ENCODE measurements at regions of chr2 and their contacts with region 1.

Region 1: GRCh38 chr2:26605195-26605998 is 35.8 kb downstream of the CIB4 start:
- DNase-seq: peak; percentile 53
- H3K4me3 ChIP-seq: no peak overlapping the region
- H3K27ac ChIP-seq: no peak overlapping the region
- H3K4me1 ChIP-seq: no peaks in the 10 kb centered on the region
- H3K27me3 ChIP-seq: no peaks in the 10 kb centered on the region
- CTCF ChIP-seq: peak; percentile 83 to 93 (median 90)
- EP300 ChIP-seq: no peak
- POLR2A ChIP-seq: no peak

Region 2: GRCh38 chr2:26745609-26746327 is 140.4 kb after region 1 on chr2:
- intact Hi-C with region 1: loop called (anchors 1 kb)
- DNase-seq: peak; percentile 90
- H3K4me3 ChIP-seq: no peak overlapping the region
- H3K27ac ChIP-seq: no peak overlapping the region
- H3K4me1 ChIP-seq: peaks cover 0 to 3% (median 0%) of the 10 kb centered on the region in 4 donors
- H3K27me3 ChIP-seq: no peaks in the 10 kb centered on the region
- CTCF ChIP-seq: peak; percentile 83 to 93 (median 90)
- EP300 ChIP-seq: no peak
- POLR2A ChIP-seq: no peak